Activated CD4-positive, alpha-beta T cell treated with anti-CD3 and anti-CD28 coated beads, Interleukin-2, amount 10 ng/mL, durations not matched to agents 7 days and 5 days (primary cell): ENCODE measurements at regions of chr7 and their contacts with region 1.

Region 1: GRCh38 chr7:66539902-66540375 is 88.7 kb upstream of the KCTD7 start:
- DNase-seq: no peak
- H3K4me3 Mint-ChIP-seq: no peak overlapping the region
- H3K27ac Mint-ChIP-seq: no peak overlapping the region
- H3K4me1 Mint-ChIP-seq: peaks cover 1% of the 10 kb centered on the region
- H3K27me3 Mint-ChIP-seq: no peaks in the 10 kb centered on the region

Region 2: DNA sequence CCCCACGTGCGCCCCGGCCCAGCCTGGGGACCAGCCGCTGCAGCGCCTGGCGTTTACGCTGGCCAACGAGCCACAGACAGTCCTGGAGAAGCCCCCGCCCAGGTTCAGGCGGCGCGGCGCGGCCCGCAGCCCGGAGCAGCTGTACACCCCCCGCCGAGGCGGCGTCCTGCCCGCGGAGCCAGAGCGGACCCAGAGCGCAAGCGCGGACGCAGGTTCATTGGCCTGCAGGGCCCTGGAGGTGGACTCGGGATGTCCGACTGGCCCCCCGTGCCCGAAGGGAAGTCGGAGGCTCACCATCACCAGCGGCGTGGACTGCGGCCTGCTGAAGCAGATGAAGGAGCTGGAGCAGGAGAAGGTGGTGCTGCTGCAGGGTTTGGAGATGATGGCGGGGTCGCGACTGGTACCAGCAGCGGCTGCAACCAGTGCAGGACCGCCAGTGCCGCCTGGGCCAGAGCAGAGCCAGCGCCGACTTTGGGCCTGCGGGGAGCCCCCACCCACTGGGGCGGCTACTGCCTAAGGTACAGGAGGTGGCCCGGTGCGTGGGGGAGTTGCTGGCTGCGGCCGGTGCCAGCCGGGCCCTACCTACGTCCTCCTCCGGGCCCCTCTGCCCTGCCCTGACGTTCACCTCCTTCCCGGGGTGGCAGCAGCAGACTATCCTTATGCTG is 16.7 kb after region 1 on chr7:
- CTCF ChIA-PET with region 1: interaction called, 10 read pairs
- POLR2A ChIA-PET with region 1: no interaction called
- DNase-seq: no peak
- H3K4me3 Mint-ChIP-seq: no peak overlapping the region
- H3K27ac Mint-ChIP-seq: no peak overlapping the region
- H3K4me1 Mint-ChIP-seq: peaks cover 4% of the 10 kb centered on the region
- H3K27me3 Mint-ChIP-seq: no peaks in the 10 kb centered on the region

Region 3: GRCh38 chr7:66654733-66655424 is 114.9 kb after region 1 on chr7:
- CTCF ChIA-PET with region 1: no interaction called
- POLR2A ChIA-PET with region 1: no interaction called
- DNase-seq: peak; percentile 49
- H3K4me3 Mint-ChIP-seq: peak overlapping the region; percentile 97
- H3K27ac Mint-ChIP-seq: peak overlapping the region; percentile 89
- H3K4me1 Mint-ChIP-seq: peaks cover 35% of the 10 kb centered on the region
- H3K27me3 Mint-ChIP-seq: no peaks in the 10 kb centered on the region